PC-3 (cell line): ENCODE measurements at regions of chr18 and their contacts with region 1.

Region 1: GRCh38 chr18:10045296-10045891 is 131.6 kb downstream of the VAPA start:
- DNase-seq: no peak
- ATAC-seq: no peak
- H3K4me3 ChIP-seq: no peak overlapping the region
- H3K27ac ChIP-seq: no peak overlapping the region
- H3K4me1 ChIP-seq: no peaks in the 10 kb centered on the region
- H3K27me3 ChIP-seq: peaks cover 37% of the 10 kb centered on the region
- CTCF ChIP-seq: no peak

Region 2: GRCh38 chr18:11570769-11571168 is 1525.4 kb after region 1 on chr18:
- CTCF ChIA-PET with region 1: no interaction called
- POLR2A ChIA-PET with region 1: interaction called, 16 read pairs
- intact Hi-C with region 1: no loop called
- DNase-seq: peak; percentile 42
- ATAC-seq: peak; percentile 22; the same call in 1 of the 2 replicates
- H3K4me3 ChIP-seq: no peak overlapping the region
- H3K27ac ChIP-seq: no peak overlapping the region
- H3K4me1 ChIP-seq: no peaks in the 10 kb centered on the region
- H3K27me3 ChIP-seq: peaks cover 87% of the 10 kb centered on the region
- CTCF ChIP-seq: peak; percentile 64